ENCODE measurements at regions of chr20 and their contacts with region 1.

Region 1: DNA sequence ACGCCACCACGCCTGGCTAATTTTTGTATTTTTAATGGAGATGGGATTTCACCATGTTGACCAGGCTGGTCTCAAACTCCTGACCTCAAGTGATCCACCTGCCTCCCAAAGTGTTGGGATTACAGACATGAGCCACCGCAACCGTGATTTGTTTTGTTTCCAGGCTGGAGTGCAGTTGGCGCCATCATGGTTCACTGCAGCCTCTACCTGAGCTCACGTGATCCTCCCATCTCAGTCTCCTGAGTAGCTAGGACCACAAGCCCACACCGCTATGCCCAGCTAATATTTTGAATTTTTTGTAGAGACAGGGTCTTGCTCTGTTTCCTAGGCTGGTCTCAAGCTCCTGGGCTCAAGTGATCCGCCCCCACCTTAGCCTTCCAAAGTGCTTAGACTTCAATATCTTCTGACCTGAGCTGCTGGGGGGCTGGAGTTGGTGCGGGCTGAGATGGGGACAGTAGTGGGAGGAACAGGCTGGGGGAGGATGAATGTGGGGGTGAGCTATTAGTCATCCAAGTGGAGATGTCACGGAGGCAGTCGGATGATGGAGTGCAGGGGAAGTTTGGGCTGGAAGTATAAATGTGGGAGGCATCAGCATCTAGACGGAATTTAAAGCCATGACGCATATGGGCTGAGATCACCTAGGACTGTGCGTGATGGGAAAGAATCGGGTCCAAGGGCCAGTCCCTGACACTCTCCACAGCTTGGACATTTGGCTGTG is 23.1 kb upstream of the ZMYND8 start:
- DNase-seq: no peak
- H3K4me3 ChIP-seq: no peak overlapping the region
- H3K4me3 Mint-ChIP-seq: no peak overlapping the region
- H3K27ac ChIP-seq: no peak overlapping the region
- H3K27ac Mint-ChIP-seq: peak overlapping the region in 2 of 7 donors; percentile 26 to 79
- H3K4me1 ChIP-seq: peaks cover 8% of the 10 kb centered on the region
- H3K4me1 Mint-ChIP-seq: peaks cover 4 to 16% (median 11%) of the 10 kb centered on the region in 4 donors
- H3K27me3 ChIP-seq: no peaks in the 10 kb centered on the region
- H3K27me3 Mint-ChIP-seq: peaks cover 0 to 2% of the 10 kb centered on the region in 2 donors

Region 2: GRCh38 chr20:47196091-47197081 is 183.2 kb before region 1 on chr20:
- CTCF ChIA-PET with region 1: interaction called, 134 read pairs
- POLR2A ChIA-PET with region 1: interaction called, 7 read pairs
- intact Hi-C with region 1: loop called (anchors 1 kb)
- DNase-seq: peak; percentile 48 to 63 (median 61)
- H3K4me3 ChIP-seq: no peak overlapping the region
- H3K4me3 Mint-ChIP-seq: no peak overlapping the region
- H3K27ac ChIP-seq: no peak overlapping the region
- H3K27ac Mint-ChIP-seq: peak overlapping the region in 1 of 7 donors; percentile 29
- H3K4me1 ChIP-seq: no peaks in the 10 kb centered on the region
- H3K4me1 Mint-ChIP-seq: peaks cover 0 to 7% (median 0%) of the 10 kb centered on the region in 4 donors
- H3K27me3 ChIP-seq: no peaks in the 10 kb centered on the region
- H3K27me3 Mint-ChIP-seq: no peaks in the 10 kb centered on the region

Region 3: GRCh38 chr20:47272893-47273590 is 106.5 kb before region 1 on chr20:
- CTCF ChIA-PET with region 1: interaction called, 646 read pairs
- POLR2A ChIA-PET with region 1: interaction called, 47 read pairs
- intact Hi-C with region 1: loop called (anchors 1 kb)
- DNase-seq: peak; percentile 58 to 70 (median 63)
- H3K4me3 ChIP-seq: no peak overlapping the region
- H3K4me3 Mint-ChIP-seq: no peak overlapping the region
- H3K27ac ChIP-seq: no peak overlapping the region
- H3K27ac Mint-ChIP-seq: peak overlapping the region in 2 of 7 donors; percentile 33 to 51
- H3K4me1 ChIP-seq: no peaks in the 10 kb centered on the region
- H3K4me1 Mint-ChIP-seq: peaks cover 7 to 18% (median 13%) of the 10 kb centered on the region in 4 donors
- H3K27me3 ChIP-seq: no peaks in the 10 kb centered on the region
- H3K27me3 Mint-ChIP-seq: no peaks in the 10 kb centered on the region

Region 4: DNA sequence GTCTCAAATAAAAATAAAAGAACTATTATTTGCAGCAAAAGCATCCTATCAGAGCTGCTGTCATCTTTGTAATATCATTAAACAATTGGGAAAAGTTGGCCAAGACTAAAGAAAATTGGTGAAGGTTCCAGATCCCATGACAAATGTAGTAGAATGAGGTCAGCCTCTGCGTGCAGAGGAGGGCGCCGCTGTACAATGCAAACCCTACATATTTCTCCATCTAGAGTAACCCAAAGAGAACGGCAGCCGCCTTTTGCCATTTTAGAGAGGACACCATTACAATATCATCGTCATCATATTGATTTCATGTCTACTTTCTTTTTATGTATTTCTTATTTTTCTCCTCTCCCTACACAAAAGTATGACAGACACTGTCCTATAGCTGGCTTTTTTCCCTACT is 82.6 kb before region 1 on chr20:
- CTCF ChIA-PET with region 1: interaction called, 31 read pairs
- POLR2A ChIA-PET with region 1: no interaction called
- intact Hi-C with region 1: no loop called
- DNase-seq: no peak
- H3K4me3 ChIP-seq: no peak overlapping the region
- H3K4me3 Mint-ChIP-seq: no peak overlapping the region
- H3K27ac ChIP-seq: no peak overlapping the region
- H3K27ac Mint-ChIP-seq: peak overlapping the region in 1 of 7 donors; percentile 57
- H3K4me1 ChIP-seq: no peaks in the 10 kb centered on the region
- H3K4me1 Mint-ChIP-seq: peaks cover 0 to 4% (median 2%) of the 10 kb centered on the region in 4 donors
- H3K27me3 ChIP-seq: no peaks in the 10 kb centered on the region
- H3K27me3 Mint-ChIP-seq: no peaks in the 10 kb centered on the region

Region 5: DNA sequence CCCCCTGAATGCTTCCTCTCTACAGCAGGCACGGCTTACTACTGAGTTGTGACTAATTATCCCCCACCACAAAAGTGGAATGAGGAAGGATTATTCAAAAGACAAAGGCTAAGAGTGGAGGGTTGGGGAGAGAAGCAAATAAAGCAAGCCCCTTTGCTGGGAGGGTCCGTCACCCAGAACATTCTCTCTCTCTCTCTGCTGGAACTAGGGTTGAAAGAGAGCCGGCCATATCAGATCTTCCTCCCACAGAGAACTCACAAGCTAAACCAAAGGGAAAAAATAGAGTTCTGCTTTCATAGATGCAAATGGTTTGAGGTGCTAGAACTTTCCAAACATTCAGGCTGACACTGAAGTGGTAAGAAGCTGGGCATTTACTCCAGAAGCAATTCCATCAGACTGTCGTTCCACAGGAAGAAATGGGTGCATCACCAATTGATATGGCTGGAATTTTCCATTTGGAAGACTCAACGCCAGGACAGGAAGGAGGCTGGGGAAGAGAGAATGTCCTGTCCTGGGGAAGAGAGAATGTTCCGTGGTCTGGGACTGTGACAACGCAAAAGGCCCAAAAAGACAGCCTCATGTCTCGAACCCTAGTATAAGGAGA is 31.0 kb before region 1 on chr20:
- CTCF ChIA-PET with region 1: interaction called, 125 read pairs
- POLR2A ChIA-PET with region 1: interaction called, 5 read pairs
- intact Hi-C with region 1: no loop called
- DNase-seq: no peak
- H3K4me3 ChIP-seq: no peak overlapping the region
- H3K4me3 Mint-ChIP-seq: no peak overlapping the region
- H3K27ac ChIP-seq: no peak overlapping the region
- H3K27ac Mint-ChIP-seq: no peak overlapping the region
- H3K4me1 ChIP-seq: peaks cover 66% of the 10 kb centered on the region
- H3K4me1 Mint-ChIP-seq: peaks cover 13 to 34% (median 28%) of the 10 kb centered on the region in 4 donors
- H3K27me3 ChIP-seq: no peaks in the 10 kb centered on the region
- H3K27me3 Mint-ChIP-seq: no peaks in the 10 kb centered on the region

Region 6: DNA sequence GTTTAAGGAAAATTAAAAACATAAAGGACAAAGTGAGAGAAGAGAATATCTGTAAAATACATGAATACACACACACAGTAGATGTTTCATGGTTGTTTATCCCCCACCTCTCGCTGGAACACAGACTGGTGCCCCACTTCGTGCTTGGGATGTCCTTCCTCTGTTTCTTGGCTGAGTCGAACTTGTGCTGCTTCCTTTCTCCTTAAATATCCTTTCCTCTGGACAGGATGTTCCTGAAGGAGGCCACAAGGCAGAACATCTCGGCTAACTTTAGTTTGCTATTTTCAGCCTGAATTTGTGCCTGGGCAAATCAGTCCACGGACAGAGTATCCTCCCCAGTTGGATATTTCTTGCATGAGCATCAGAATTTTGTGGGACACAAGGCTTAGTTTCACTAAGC is 31.6 kb after region 1 on chr20:
- CTCF ChIA-PET with region 1: interaction called, 25 read pairs
- POLR2A ChIA-PET with region 1: no interaction called
- intact Hi-C with region 1: no loop called
- DNase-seq: no peak
- H3K4me3 ChIP-seq: no peak overlapping the region
- H3K4me3 Mint-ChIP-seq: no peak overlapping the region
- H3K27ac ChIP-seq: no peak overlapping the region
- H3K27ac Mint-ChIP-seq: no peak overlapping the region
- H3K4me1 ChIP-seq: peaks cover 29% of the 10 kb centered on the region
- H3K4me1 Mint-ChIP-seq: peaks cover 11 to 31% (median 23%) of the 10 kb centered on the region in 4 donors
- H3K27me3 ChIP-seq: no peaks in the 10 kb centered on the region
- H3K27me3 Mint-ChIP-seq: no peaks in the 10 kb centered on the region

Measured in CD4-positive, alpha-beta memory T cell (primary cell).